PC-9 (cell line): ENCODE measurements at regions of chr1 and their contacts with region 1.

Region 1: GRCh38 chr1:213094446-213094845 is 43.4 kb downstream of the RPS6KC1 start:
- DNase-seq: no peak
- H3K4me3 ChIP-seq: no peak overlapping the region
- H3K27ac ChIP-seq: no peak overlapping the region
- H3K4me1 ChIP-seq: no peaks in the 10 kb centered on the region
- H3K27me3 ChIP-seq: no peaks in the 10 kb centered on the region
- CTCF ChIP-seq: no peak

Region 2: GRCh38 chr1:213051127-213051880 is 43.1 kb before region 1 on chr1 and contains the start of gene RPS6KC1:
- CTCF ChIA-PET with region 1: interaction called, 11 read pairs
- POLR2A ChIA-PET with region 1: no interaction called
- intact Hi-C with region 1: no loop called
- DNase-seq: peak; percentile 69 to 78
- H3K4me3 ChIP-seq: peak within 1 kb of the TSS; percentile 92
- H3K27ac ChIP-seq: peak within 1 kb of the TSS; percentile 41
- H3K4me1 ChIP-seq: peaks cover 16% of the 10 kb centered on the region
- H3K27me3 ChIP-seq: no peaks in the 10 kb centered on the region
- CTCF ChIP-seq: peak; percentile 34; the same call in 1 of the 2 replicates
- total RNA-seq, gene RPS6KC1: 14.5 and 16.4 TPM in 2 replicates